GM12878 (cell line): ENCODE measurements at regions of chr11 and their contacts with region 1.

Region 1: GRCh38 chr11:94519478-94520084 is 7.3 kb downstream of the C11orf97 start:
- DNase-seq: no peak
- ATAC-seq: peak; percentile 78
- H3K4me3 ChIP-seq: no peak overlapping the region
- H3K27ac ChIP-seq: no peak overlapping the region
- H3K4me1 ChIP-seq: no peaks in the 10 kb centered on the region; the same call in 1 of the 2 replicates
- H3K27me3 ChIP-seq: no peaks in the 10 kb centered on the region
- CTCF ChIP-seq: peak; percentile 37 to 47 (median 40); a peak in 5 of 6 replicates
- EP300 ChIP-seq: no peak
- POLR2A ChIP-seq: no peak
- RAD21 ChIP-seq: peak; percentile 73

Region 2: DNA sequence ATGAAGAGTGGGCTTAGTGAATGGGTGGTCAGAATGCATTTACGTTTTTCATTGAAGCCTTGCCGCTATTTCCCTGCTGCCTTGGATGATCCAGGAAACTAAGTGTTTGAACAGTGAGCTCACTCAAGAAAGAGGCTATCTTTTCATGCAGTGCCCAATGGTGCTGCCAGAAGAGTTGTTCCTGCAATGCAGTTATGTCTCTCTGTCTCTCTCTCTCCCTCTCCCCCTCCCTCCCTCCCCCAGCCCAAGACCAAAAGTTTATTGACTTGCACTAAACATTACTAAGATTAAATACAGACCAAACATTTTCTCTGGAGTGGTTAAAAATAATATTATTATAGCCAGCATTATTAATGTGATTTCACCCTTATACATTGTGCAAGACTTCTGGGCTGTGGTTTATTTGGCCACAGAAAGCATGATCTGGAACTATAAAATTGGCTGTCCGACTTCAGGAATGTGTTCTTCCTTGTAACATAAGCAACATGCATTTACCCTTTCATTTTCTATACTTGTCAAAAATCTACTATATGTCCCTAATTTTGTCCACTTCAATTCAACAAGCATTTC is 17.5 kb after region 1 on chr11:
- CTCF ChIA-PET with region 1: interaction called, 17 read pairs
- POLR2A ChIA-PET with region 1: no interaction called
- RAD21 ChIA-PET with region 1: interaction called, 3 read pairs
- SMC1A ChIA-PET with region 1: interaction called, 4 read pairs
- in situ Hi-C with region 1: no loop called
- intact Hi-C with region 1: no loop called
- DNase-seq: no peak
- ATAC-seq: no peak
- H3K4me3 ChIP-seq: no peak overlapping the region
- H3K27ac ChIP-seq: no peak overlapping the region
- H3K4me1 ChIP-seq: no peaks in the 10 kb centered on the region
- H3K27me3 ChIP-seq: no peaks in the 10 kb centered on the region
- CTCF ChIP-seq: no peak
- EP300 ChIP-seq: no peak
- POLR2A ChIP-seq: no peak
- RAD21 ChIP-seq: no peak

Region 3: DNA sequence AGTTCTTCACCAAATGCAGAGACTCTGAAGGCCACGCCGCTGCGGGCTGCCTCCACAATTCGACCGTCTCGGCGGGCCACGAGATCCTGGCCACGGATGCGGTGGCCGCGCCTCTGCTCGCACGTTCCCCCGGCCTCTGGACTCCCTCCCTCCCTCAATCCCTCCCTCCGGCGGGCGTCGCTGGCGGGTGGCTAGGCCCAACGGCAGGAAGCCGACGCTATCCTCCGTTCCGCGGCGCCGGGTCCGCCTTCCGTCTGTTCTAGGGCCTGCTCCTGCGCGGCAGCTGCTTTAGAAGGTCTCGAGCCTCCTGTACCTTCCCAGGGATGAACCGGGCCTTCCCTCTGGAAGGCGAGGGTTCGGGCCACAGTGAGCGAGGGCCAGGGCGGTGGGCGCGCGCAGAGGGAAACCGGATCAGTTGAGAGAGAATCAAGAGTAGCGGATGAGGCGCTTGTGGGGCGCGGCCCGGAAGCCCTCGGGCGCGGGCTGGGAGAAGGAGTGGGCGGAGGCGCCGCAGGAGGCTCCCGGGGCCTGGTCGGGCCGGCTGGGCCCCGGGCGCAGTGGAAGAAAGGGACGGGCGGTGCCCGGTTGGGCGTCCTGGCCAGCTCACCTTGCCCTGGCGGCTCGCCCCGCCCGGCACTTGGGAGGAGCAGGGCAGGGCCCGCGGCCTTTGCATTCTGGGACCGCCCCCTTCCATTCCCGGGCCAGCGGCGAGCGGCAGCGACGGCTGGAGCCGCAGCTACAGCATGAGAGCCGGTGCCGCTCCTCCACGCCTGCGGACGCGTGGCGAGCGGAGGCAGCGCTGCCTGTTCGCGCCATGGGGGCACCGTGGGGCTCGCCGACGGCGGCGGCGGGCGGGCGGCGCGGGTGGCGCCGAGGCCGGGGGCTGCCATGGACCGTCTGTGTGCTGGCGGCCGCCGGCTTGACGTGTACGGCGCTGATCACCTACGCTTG is 24.4 kb after region 1 on chr11 and contains the start of gene FUT4:
- CTCF ChIA-PET with region 1: interaction called, 32 read pairs
- POLR2A ChIA-PET with region 1: interaction called, 3 read pairs
- RAD21 ChIA-PET with region 1: interaction called, 5 read pairs
- SMC1A ChIA-PET with region 1: interaction called, 16 read pairs
- in situ Hi-C with region 1: no loop called
- intact Hi-C with region 1: loop called (anchors 1 kb)
- DNase-seq: no peak
- ATAC-seq: peak; percentile 88
- H3K4me3 ChIP-seq: peak within 1 kb of the TSS; percentile 80
- H3K27ac ChIP-seq: peak within 1 kb of the TSS; percentile 79
- H3K4me1 ChIP-seq: no peaks in the 10 kb centered on the region
- H3K27me3 ChIP-seq: no peaks in the 10 kb centered on the region
- CTCF ChIP-seq: peak in 1 of 3 experiments; percentile 2; a peak in 2 of 6 replicates
- EP300 ChIP-seq: no peak
- POLR2A ChIP-seq: peak; percentile 80
- RAD21 ChIP-seq: no peak
- polyA plus RNA-seq, gene FUT4: 0.68 TPM

Region 4: GRCh38 chr11:94563176-94563847 is 43.7 kb after region 1 on chr11:
- CTCF ChIA-PET with region 1: interaction called, 6 read pairs
- POLR2A ChIA-PET with region 1: no interaction called
- RAD21 ChIA-PET with region 1: no interaction called
- SMC1A ChIA-PET with region 1: interaction called, 11 read pairs
- in situ Hi-C with region 1: no loop called
- intact Hi-C with region 1: no loop called
- DNase-seq: no peak
- ATAC-seq: no peak
- H3K4me3 ChIP-seq: no peak overlapping the region
- H3K27ac ChIP-seq: no peak overlapping the region
- H3K4me1 ChIP-seq: no peaks in the 10 kb centered on the region
- H3K27me3 ChIP-seq: no peaks in the 10 kb centered on the region
- CTCF ChIP-seq: no peak
- EP300 ChIP-seq: no peak
- POLR2A ChIP-seq: no peak
- RAD21 ChIP-seq: no peak

Region 5: DNA sequence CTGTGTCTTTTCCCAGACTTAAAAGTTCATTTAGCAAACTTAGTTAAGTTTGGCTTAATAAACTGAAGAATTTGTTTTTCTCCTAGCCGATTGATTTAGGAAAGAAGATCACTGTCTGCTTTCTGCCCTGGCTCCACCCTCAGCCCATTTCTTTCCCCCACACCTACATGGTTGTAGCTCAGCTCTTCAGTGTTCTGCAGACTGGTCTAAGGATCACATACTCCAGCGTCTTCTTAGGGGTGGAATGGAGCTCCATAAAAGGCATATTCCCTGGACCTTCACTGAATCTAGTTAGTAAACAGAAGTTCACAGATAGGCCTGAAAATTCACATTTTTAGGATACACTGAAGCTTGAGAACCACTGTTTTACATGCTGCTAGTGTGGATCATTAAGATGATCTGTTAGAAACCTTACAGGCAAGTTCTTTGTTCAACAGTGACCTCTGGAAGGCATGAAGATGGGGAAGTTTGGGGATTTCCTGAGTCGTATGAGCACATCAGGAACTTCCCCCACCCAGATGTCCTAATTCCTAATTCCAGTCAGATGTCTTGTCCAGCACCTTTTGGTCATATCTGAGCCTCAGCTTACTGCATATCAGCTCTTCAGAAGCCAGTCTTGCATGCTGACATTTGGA is 64.4 kb after region 1 on chr11:
- CTCF ChIA-PET with region 1: interaction called, 100 read pairs
- POLR2A ChIA-PET with region 1: interaction called, 3 read pairs
- RAD21 ChIA-PET with region 1: interaction called, 7 read pairs
- SMC1A ChIA-PET with region 1: interaction called, 145 read pairs
- in situ Hi-C with region 1: no loop called
- intact Hi-C with region 1: no loop called
- DNase-seq: peak; percentile 62
- ATAC-seq: peak; percentile 73
- H3K4me3 ChIP-seq: peak overlapping the region; percentile 8
- H3K27ac ChIP-seq: peak overlapping the region; percentile 84
- H3K4me1 ChIP-seq: peaks cover 22% of the 10 kb centered on the region
- H3K27me3 ChIP-seq: no peaks in the 10 kb centered on the region
- CTCF ChIP-seq: no peak
- EP300 ChIP-seq: peak; percentile 81 to 82; a peak in 3 of 4 replicates
- POLR2A ChIP-seq: no peak
- RAD21 ChIP-seq: no peak

Region 6: DNA sequence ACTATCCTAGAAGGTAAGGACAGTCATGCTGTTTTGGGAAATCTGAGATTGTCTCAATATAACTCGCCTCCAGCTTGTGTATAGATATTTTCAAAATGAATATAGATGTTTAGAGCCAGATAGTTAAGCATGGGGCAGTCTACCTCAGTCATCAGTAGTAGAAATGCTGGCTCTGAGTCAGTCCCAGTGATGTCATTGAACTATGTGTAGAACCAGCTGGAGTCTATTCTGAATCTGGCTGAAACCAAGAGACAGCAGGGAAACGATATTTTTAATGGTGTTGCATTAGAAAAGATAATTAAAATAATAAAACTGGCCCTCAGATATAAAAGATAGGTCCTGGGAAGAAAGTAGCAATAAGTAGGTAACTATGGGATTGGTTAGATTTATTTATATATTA is 73.4 kb after region 1 on chr11:
- CTCF ChIA-PET with region 1: interaction called, 282 read pairs
- POLR2A ChIA-PET with region 1: interaction called, 5 read pairs
- RAD21 ChIA-PET with region 1: interaction called, 55 read pairs
- SMC1A ChIA-PET with region 1: interaction called, 179 read pairs
- in situ Hi-C with region 1: loop called (anchors 5 kb)
- intact Hi-C with region 1: loop called (anchors 1 kb)
- DNase-seq: no peak
- ATAC-seq: peak; percentile 82
- H3K4me3 ChIP-seq: no peak overlapping the region
- H3K27ac ChIP-seq: no peak overlapping the region
- H3K4me1 ChIP-seq: no peaks in the 10 kb centered on the region
- H3K27me3 ChIP-seq: no peaks in the 10 kb centered on the region
- CTCF ChIP-seq: no peak
- EP300 ChIP-seq: peak in 1 of 2 experiments; percentile 41; a peak in 1 of 4 replicates
- POLR2A ChIP-seq: no peak
- RAD21 ChIP-seq: no peak

Region 7: DNA sequence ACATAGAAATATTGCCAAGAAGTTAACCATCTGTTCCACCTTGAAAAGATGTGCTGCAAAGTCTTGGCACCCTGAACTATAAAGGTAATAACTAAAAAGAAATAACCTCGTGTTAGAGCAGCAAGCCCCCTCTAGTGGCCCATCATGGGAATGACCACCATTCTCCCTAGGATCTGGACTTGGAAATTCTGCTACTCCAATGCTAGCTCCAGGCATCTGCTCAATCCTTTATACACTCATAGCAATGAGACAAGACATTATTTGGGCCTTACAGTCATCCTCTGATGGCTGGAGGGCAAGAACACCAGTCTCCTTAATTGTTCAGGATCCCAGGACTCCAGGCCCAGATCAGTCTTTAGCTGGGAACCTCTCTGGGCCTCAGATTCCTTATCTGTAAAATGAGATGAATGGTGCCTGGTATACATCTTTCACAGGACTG is 377.8 kb after region 1 on chr11:
- CTCF ChIA-PET with region 1: interaction called, 8 read pairs
- POLR2A ChIA-PET with region 1: no interaction called
- RAD21 ChIA-PET with region 1: interaction called, 3 read pairs
- SMC1A ChIA-PET with region 1: interaction called, 3 read pairs
- in situ Hi-C with region 1: no loop called
- intact Hi-C with region 1: loop called (anchors 2 kb)
- DNase-seq: no peak
- ATAC-seq: peak; percentile 71
- H3K4me3 ChIP-seq: no peak overlapping the region
- H3K27ac ChIP-seq: no peak overlapping the region
- H3K4me1 ChIP-seq: no peaks in the 10 kb centered on the region
- H3K27me3 ChIP-seq: peaks cover 0 to 3% of the 10 kb centered on the region in 2 experiments; a peak in 1 of 4 replicates
- CTCF ChIP-seq: peak; percentile 81 to 89 (median 88)
- EP300 ChIP-seq: no peak
- POLR2A ChIP-seq: no peak
- RAD21 ChIP-seq: peak; percentile 76